Activated B cell treated with CpG ODN at 0.5 μM for 24 hours (primary cell): ENCODE measurements at regions of chr7 and their contacts with region 1.

Region 1: DNA sequence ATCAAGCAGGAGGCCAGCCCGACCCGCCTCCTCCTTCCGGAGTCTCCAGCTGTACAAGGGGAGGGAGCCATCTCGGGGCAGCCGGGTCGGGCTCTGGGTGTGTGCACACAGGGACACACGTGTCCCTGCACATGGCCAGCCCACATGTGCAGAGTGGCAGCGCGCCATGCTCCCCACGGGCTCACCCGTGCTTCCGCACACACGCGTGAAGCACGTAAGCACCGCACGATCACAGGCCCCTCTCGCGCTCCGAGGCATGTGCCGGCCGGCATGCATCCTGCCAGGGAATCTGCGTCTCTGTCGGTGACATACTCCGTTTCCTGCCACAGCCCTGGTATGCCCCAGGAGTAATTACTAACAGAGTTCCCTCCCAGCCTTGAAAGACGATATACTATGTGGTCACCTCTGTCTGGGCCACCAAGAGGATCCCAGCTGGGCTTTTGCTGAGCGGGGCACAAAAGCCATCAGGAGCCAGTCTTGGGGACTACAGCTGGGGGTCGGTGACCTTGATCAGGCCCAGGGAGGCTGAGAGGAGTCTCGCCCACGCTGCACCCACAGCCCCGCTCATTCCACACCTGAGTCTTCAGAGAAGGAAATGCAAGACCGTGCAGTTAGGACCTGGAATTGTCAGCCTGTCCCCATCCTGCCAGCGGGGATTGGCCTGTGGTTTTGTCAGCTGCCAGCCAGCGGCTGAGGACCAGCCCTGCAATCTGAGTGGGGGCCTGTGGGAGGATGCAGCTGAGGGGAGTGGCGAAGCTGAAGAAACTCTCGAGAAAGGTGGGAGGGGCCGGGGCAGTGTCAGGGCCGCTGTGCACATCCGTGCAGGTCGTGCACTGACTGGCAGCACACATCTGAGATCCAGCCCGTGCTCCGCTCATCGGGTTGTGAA is 11.0 kb upstream of the LFNG start:
- DNase-seq: peak; percentile 62
- ATAC-seq: peak; percentile 51
- H3K4me3 Mint-ChIP-seq: peak overlapping the region; percentile 65
- H3K27ac Mint-ChIP-seq: peak overlapping the region; percentile 95
- H3K4me1 Mint-ChIP-seq: peaks cover 68% of the 10 kb centered on the region
- H3K27me3 Mint-ChIP-seq: no peaks in the 10 kb centered on the region
- CTCF ChIP-seq: no peak

Region 2: DNA sequence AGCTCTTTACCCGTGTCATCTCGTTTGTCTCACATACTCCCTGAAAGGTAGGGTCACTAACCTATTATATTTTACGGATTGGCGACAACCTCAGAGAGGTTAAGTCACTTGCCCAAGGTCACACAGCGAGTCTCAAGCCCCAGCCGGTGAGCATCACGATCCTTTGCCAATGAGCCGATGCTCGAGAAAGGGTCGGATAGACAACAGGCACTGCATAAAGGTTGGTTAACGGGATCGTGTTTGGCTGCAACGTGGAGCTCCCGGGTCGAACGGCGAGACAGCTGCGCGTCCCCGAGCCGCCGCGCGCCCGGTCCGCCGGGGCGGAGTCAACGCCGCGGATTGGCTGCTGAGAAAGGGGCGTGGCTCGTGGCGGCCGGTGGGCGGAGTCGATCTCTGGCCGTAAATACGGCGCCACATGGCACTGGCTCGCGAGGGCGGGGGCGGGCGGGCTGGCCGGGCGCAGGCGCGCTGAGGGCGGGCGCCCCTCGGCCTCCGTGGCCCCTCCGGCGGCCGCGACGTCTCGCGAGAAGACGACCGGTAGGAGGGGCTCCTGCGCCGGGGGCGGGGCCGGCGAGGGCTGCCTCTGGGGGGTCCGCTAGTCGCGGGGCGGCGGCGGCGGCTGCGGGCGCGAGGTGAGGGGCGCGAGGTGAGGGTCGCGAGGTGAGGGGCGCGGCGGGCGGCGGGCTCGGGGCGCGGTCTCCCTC is 105.4 kb before region 1 on chr7 and contains the start of gene CHST12:
- CTCF ChIA-PET with region 1: no interaction called
- POLR2A ChIA-PET with region 1: interaction called, 7 read pairs
- intact Hi-C with region 1: loop called (anchors 5 kb)
- DNase-seq: peak; percentile 91
- ATAC-seq: peak; percentile 77
- H3K4me3 Mint-ChIP-seq: peak within 1 kb of the TSS; percentile 85
- H3K27ac Mint-ChIP-seq: peak within 1 kb of the TSS; percentile 93
- H3K4me1 Mint-ChIP-seq: peaks cover 47% of the 10 kb centered on the region
- H3K27me3 Mint-ChIP-seq: no peaks in the 10 kb centered on the region
- CTCF ChIP-seq: no peak
- total RNA-seq, gene CHST12: 10.3 and 14.4 TPM in 2 replicates

Region 3: GRCh38 chr7:2519119-2519930 is 10.8 kb after region 1 on chr7 and contains the start of gene LFNG:
- CTCF ChIA-PET with region 1: interaction called, 8 read pairs
- POLR2A ChIA-PET with region 1: interaction called, 240 read pairs
- intact Hi-C with region 1: loop called (anchors 1 kb)
- DNase-seq: peak; percentile 94
- ATAC-seq: peak; percentile 75
- H3K4me3 Mint-ChIP-seq: peak within 1 kb of the TSS; percentile 96
- H3K27ac Mint-ChIP-seq: peak within 1 kb of the TSS; percentile 87
- H3K4me1 Mint-ChIP-seq: peaks cover 49% of the 10 kb centered on the region
- H3K27me3 Mint-ChIP-seq: no peaks in the 10 kb centered on the region
- CTCF ChIP-seq: no peak
- total RNA-seq, gene LFNG: 87.4 and 95.8 TPM in 2 replicates

Region 4: GRCh38 chr7:2555121-2556052 is 46.8 kb after region 1 on chr7 and contains the start of gene BRAT1:
- CTCF ChIA-PET with region 1: interaction called, 3 read pairs
- POLR2A ChIA-PET with region 1: interaction called, 16 read pairs
- intact Hi-C with region 1: loop called (anchors 1 kb)
- DNase-seq: peak; percentile 89
- ATAC-seq: peak; percentile 86
- H3K4me3 Mint-ChIP-seq: peak within 1 kb of the TSS; percentile 87
- H3K27ac Mint-ChIP-seq: peak within 1 kb of the TSS; percentile 92
- H3K4me1 Mint-ChIP-seq: peaks cover 45% of the 10 kb centered on the region
- H3K27me3 Mint-ChIP-seq: no peaks in the 10 kb centered on the region
- CTCF ChIP-seq: no peak
- total RNA-seq, gene BRAT1: 29.6 and 31.7 TPM in 2 replicates

Region 5: DNA sequence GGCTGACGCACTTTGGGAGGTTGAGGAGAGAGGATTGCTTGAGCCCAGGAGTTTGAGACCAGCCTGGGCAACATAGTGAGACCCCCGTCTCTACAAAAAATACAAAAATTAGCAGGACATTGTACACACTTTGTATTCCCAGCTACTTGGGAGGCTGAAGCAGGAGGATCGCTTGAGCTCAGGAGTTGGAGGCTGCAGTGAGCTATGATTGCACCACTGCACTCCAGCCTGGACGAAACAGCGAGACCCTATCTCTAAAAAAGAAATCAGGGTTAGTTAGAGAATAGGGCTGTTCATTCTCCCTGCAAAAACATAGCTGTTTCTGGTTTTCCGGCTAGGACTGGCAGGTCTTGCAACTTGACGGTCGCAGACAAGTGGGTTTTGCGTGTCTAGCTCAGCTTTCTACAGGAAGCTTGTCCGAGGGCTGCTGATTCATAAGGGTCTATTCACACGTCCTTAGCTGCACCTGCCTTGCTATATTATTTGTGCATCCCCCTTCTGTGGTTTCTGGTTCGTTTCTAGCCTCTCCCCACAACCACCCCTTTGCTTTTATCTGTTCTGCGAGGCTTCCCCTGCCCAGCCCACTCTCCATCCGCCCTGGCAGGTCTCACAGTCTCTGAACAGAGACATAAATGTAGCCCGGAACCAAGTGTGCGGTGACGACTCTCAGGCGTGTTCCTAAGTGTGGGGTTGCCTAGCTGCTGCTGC is 190.2 kb after region 1 on chr7:
- CTCF ChIA-PET with region 1: no interaction called
- POLR2A ChIA-PET with region 1: interaction called, 17 read pairs
- intact Hi-C with region 1: no loop called
- DNase-seq: peak; percentile 50
- ATAC-seq: peak; percentile 94
- H3K4me3 Mint-ChIP-seq: peak overlapping the region; percentile 69
- H3K27ac Mint-ChIP-seq: peak overlapping the region; percentile 75
- H3K4me1 Mint-ChIP-seq: peaks cover 21% of the 10 kb centered on the region
- H3K27me3 Mint-ChIP-seq: peaks cover 2% of the 10 kb centered on the region
- CTCF ChIP-seq: no peak

Region 6: GRCh38 chr7:2943851-2944601 is 435.5 kb after region 1 on chr7:
- CTCF ChIA-PET with region 1: no interaction called
- POLR2A ChIA-PET with region 1: no interaction called
- intact Hi-C with region 1: no loop called
- DNase-seq: no peak
- ATAC-seq: no peak
- H3K4me3 Mint-ChIP-seq: no peak overlapping the region
- H3K27ac Mint-ChIP-seq: no peak overlapping the region
- H3K4me1 Mint-ChIP-seq: peaks cover 21% of the 10 kb centered on the region
- H3K27me3 Mint-ChIP-seq: no peaks in the 10 kb centered on the region
- CTCF ChIP-seq: no peak